Dorsolateral prefrontal cortex (tissue), 120 donors: ENCODE measurements at regions of chr3 and their contacts with region 1.

Region 1: DNA sequence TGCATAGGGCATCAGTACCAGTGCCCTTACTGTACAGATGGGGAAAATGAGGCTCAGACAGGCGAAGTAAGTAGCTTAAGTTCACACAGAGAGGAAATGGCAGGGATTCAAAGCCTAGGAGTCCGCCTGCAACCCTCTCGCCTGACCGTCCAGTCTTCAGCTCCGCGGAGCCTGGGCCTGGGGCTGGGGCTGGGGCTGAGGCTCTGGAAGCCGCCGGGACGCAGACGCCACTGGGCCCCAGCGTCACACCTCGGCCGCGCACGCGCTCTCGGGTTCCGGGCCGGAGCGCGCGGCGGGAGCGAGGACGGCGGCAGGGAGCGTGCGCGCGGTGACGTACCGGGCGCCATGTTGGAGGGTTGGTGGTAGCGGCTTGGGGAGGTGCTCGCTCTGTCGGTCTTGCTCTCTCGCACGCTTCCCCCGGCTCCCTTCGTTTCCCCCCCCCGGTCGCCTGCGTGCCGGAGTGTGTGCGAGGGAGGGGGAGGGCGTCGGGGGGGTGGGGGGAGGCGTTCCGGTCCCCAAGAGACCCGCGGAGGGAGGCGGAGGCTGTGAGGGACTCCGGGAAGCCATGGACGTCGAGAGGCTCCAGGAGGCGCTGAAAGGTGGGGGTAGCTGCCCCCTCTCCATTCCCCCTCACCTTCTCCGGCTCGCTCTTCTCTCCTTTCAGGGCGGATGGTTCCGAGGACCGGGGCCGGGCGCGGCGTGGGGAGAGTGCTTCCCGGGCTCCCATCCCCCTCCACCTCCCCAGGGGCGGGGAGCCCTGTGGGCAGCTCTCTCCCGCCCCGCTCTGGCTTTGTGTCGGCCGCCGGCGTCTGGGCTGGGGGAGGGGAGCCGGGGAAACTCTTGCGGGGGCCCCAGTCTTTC is at the start of gene PPP4R2:
- DNase-seq: peak; percentile 68 to 92 (median 80)
- H3K4me3 ChIP-seq: peak within 1 kb of the TSS; percentile 67 to 97 (median 89)
- H3K27ac ChIP-seq: peak within 1 kb of the TSS; percentile 87 to 99 (median 96)
- H3K27me3 ChIP-seq: no peaks in the 10 kb centered on the region
- CTCF ChIP-seq: peak in 16 of 56 donors; percentile 9 to 51 (median 20)
- total RNA-seq, gene PPP4R2: 50.2 to 118 (median 78.2) TPM

Region 2: DNA sequence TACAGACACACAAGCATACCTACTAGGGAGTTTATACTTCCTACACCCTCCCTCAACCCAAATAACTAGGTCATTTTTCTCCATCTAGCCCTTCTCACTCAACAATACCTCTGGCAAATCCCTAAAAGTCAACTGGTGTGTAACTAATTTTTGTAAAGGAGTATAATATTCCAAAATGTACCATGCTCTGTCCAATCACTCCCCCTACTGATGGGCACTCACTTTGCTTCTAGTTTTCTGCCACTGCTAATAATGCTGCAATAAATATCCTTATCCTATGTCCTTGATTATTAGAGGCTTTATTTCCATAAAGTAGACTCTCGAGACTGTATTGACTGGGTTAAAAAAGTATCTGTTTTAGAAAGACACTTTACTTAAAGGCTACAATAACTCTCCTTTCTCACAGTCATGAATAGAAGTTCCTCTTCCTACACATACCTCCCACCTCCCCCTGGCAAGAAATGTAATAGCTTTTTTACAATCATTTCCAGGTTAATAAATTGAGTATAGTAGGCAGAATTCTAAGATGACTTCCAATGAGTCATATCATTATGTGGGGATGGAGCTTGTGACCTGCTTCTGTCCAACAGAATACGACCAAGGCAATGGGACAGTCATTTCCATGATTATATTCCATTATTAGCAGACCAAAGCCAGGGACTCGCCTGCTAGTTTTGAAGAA is 178.5 kb before region 1 on chr3:
- intact Hi-C with region 1: no loop called
- DNase-seq: peak in 1 of 10 donors; percentile 22
- H3K4me3 ChIP-seq: no peak overlapping the region
- H3K27ac ChIP-seq: peak overlapping the region in 17 of 59 donors; percentile 3 to 55 (median 29)
- H3K27me3 ChIP-seq: no peaks in the 10 kb centered on the region
- CTCF ChIP-seq: peak in 55 of 56 donors; percentile 47 to 87 (median 70)

Region 3: DNA sequence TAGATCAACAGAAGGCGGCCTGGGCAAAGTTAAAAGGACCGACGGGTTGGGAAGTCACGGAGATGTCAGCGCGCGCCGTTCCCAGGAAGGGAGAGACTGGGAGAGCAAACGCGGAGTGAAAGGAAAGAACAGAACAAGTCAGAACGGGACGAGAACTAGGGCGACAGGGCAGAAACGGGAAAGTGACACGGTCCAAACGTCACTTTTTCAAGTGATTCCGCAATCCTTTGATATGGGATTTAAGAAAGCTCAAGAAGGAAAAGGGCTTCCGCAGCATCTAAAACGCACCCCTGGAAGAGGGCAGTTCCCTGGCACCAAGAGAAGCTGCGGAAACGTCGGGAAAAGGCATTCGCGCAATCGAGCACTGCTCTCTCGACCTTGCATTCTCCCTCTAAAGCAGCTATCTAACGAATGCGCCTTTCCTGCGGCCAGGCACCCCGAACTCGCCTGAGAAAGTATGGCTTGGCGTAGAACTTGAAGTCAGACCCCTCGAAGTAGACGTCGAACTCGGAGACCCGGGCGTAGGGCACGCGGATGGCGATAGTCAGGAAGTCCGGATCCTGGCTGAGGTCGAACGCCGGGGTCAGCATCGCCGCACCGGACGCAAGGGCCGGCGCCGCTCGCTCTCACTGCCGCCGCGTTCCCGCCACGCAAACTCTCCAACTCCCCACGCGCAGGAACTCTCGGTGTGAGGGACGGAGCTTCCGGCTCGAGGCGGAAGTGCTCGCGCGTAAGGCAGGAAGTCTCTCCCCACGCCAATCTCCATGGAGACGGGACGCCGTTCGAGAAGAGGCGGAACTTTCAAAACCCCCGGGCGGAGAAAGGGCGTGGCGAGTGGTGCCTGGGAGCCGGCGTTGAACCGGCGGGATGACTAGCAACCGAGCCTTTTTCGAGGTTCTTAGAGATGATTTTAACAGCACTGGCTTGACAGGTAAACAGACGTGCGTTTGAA is 148.7 kb before region 1 on chr3 and contains the start of gene SHQ1:
- intact Hi-C with region 1: loop called (anchors 2 to 5 kb)
- DNase-seq: peak; percentile 88 to 95 (median 93)
- H3K4me3 ChIP-seq: peak within 1 kb of the TSS; percentile 64 to 99 (median 88)
- H3K27ac ChIP-seq: peak within 1 kb of the TSS in 37 of 59 donors; percentile 6 to 84 (median 55)
- H3K27me3 ChIP-seq: peaks cover 0 to under 1% (median 0%) of the 10 kb centered on the region in 45 donors
- CTCF ChIP-seq: peak in 22 of 56 donors; percentile 6 to 45 (median 24)
- total RNA-seq, gene SHQ1: 14.8 to 39.4 (median 25.9) TPM

Region 4: DNA sequence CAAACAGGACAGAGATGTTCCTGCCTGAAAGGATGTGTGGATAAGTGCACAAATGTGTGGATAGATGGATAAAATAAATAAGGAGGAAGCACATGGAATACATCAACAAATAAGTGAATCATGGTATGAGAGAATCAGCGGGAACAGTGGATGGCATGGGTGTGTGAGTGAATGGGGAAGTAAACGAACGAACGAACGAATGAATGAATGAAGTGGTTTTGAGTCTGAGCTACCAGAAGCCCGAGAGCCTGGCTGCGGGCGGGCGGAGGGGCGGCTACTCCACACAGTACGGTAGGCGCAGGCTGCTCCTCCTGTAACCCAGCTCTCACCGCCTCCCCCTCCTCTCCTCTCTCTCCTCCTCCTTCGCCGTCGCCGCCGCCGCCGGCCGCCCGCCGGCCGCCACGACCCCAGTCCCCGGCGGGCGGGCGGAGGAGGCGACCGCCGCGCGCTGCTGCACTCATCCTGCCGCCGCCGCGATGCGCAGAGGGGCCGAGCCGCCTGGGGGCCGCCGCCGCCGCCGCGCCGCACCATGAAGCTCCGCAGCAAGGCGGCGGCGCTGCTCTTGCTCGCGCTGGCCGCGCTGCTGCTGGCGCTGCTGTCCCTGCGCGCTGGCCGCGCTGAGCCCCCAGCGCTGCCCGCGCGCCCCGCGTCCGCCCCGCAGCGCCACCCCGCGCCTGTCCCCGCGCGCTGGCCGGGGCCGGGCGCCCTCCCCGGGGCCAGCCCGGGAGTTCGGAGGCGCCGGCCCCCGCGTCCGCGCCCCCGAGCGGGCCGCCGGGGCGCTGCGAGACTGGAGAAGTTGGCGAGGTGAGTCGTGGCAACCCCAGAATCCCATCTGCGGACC is 108.8 kb before region 1 on chr3 and contains the start of gene GXYLT2:
- intact Hi-C with region 1: loop called (anchors 2 kb)
- DNase-seq: peak; percentile 48 to 87 (median 80)
- H3K4me3 ChIP-seq: peak within 1 kb of the TSS; percentile 32 to 83 (median 63)
- H3K27ac ChIP-seq: peak within 1 kb of the TSS; percentile 4 to 92 (median 82)
- H3K27me3 ChIP-seq: no peaks in the 10 kb centered on the region
- CTCF ChIP-seq: peak in 9 of 56 donors; percentile 4 to 23 (median 11)
- total RNA-seq, gene GXYLT2: 4.5 to 19.1 (median 9.2) TPM

Region 5: GRCh38 chr3:72938471-72939265 is 58.0 kb before region 1 on chr3:
- intact Hi-C with region 1: loop called (anchors 2 kb)
- DNase-seq: peak in 3 of 10 donors; percentile 7 to 30 (median 10)
- H3K4me3 ChIP-seq: peak overlapping the region in 17 of 59 donors; percentile 5 to 34 (median 16)
- H3K27ac ChIP-seq: peak overlapping the region in 58 of 59 donors; percentile 10 to 86 (median 74)
- H3K27me3 ChIP-seq: no peaks in the 10 kb centered on the region
- CTCF ChIP-seq: peak in 55 of 56 donors; percentile 44 to 89 (median 73)

Region 6: DNA sequence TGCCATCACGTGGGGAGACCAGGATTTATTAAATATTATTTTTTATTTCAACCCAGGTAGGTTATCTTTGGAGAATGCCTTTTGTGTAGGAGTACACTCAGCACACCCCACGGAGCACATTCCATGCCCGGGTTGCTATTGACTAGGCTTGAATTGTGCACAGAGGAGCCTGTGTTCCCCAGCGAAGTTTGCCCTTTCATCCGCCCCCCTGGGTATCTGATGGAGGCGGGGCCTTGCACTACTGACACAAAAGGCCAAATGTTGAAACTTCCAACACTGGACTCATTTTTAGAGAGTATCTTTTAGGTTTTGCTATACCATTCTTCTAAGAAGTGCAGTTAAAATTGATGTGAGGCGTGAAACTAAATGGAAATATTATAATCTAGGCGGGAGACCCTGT is 39.4 kb before region 1 on chr3:
- intact Hi-C with region 1: loop called (anchors 2 to 5 kb)
- DNase-seq: peak; percentile 8 to 89 (median 78)
- H3K4me3 ChIP-seq: peak overlapping the region in 5 of 59 donors; percentile 2 to 37 (median 27)
- H3K27ac ChIP-seq: peak overlapping the region in 58 of 59 donors; percentile 79 to 100 (median 94)
- H3K27me3 ChIP-seq: no peaks in the 10 kb centered on the region
- CTCF ChIP-seq: peak in 4 of 56 donors; percentile 8 to 17 (median 12)

Region 7: DNA sequence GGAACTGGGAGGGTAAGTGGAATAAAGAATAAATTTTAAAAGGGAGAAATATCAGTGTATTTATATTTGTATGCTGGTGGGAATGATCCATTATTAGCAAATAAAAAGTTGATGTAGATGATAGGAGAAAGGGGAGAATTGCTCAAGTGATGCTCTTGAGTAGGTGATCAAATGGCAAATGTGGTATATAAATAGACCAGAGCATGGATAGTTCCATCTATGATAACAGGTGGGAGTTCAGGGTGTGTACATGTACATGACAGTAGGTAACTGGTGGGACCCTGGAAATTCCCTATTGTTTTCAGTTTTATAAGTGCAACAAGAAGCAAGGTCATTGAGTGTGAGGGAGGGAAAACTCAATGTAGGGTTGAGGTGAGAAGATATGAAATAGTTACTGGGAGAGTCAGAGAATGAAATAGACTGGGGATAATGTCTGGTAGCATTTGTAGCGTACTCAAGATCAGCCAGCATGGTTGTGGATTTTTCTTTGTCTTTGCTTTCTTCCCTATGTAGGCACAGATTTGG is 33.4 kb after region 1 on chr3:
- intact Hi-C with region 1: loop called in 1 of 2 experiments (anchors 5 kb)
- DNase-seq: no peak
- H3K4me3 ChIP-seq: no peak overlapping the region
- H3K27ac ChIP-seq: peak overlapping the region in 48 of 59 donors; percentile 1 to 97 (median 67)
- H3K27me3 ChIP-seq: no peaks in the 10 kb centered on the region
- CTCF ChIP-seq: no peak

Region 8: DNA sequence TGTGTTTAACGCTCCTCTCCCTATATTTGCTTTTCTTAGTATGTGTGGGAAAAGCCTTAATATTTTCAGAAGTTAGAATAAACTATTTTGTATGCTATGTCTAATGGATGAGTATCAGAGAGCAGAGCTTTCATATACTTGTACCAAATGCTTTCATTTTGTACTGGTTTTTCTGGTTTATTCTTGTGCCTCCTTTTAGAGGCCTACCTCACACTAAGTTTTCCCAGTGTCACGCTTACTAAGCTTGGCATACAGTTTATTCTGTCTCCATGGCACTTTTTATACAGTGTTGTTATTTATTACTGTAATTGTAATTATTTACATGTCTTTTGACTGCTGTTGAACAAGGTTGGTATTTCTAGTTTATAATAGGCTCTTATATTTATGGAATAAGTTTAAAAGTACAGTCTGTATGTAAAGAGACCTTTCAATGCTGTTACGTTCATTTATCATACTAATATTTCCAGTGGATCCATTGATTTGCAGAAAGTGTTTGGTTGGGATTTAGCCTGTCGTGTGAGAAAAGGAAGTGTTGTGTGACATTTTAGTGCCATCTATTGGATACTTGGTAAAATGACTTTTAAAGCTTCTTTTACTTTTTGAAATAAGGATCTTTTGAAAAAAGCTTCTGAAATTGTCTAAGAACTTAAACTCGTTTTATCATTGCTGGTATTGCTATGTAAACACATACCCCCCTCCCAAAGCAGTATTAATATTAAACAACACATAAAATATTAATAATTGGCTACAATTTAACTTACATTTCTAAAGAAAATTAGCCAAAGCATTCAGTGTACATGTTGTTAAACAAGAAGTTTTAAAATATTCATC is 59.5 kb after region 1 on chr3:
- intact Hi-C with region 1: loop called (anchors 5 kb)
- DNase-seq: no peak
- H3K4me3 ChIP-seq: peak overlapping the region in 6 of 59 donors; percentile 2 to 27 (median 17)
- H3K27ac ChIP-seq: peak overlapping the region in 41 of 59 donors; percentile 6 to 81 (median 57)
- H3K27me3 ChIP-seq: no peaks in the 10 kb centered on the region
- CTCF ChIP-seq: peak in 55 of 56 donors; percentile 24 to 85 (median 66)

Region 9: GRCh38 chr3:73164622-73165021 is 167.9 kb after region 1 on chr3:
- intact Hi-C with region 1: no loop called
- DNase-seq: no peak
- H3K4me3 ChIP-seq: no peak overlapping the region
- H3K27ac ChIP-seq: no peak overlapping the region
- H3K27me3 ChIP-seq: no peaks in the 10 kb centered on the region
- CTCF ChIP-seq: no peak

Region 10: DNA sequence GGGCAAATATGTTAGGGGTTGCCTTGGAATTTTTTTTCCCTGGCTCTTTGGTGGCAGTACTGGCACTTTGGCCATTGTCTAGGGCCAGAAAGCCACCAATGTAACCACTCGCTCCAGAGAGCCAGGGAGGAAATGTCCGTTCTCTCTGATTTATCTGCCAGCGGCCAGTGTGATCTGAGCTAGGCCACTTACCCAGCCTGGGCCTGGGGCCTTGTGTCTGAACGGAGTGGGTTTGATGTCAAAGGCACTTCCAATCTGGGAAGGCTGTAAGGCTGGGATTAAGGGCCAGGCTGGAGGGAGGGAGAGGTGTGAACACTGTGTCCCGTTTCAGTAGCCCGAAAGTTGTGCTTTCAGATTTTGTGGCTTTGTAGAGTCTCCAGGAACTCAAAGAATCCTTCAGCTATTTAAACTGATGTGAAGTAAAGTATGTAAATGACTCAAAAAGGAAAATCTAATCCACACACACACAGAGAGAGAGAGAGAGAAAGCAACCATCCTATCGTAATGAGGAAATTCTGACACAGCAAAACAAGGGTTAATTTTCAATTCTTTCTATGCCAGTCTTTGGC is 357.0 kb after region 1 on chr3:
- intact Hi-C with region 1: no loop called
- DNase-seq: no peak
- H3K4me3 ChIP-seq: no peak overlapping the region
- H3K27ac ChIP-seq: no peak overlapping the region
- H3K27me3 ChIP-seq: peaks cover 0 to 12% (median 0%) of the 10 kb centered on the region in 45 donors
- CTCF ChIP-seq: no peak